ENCODE measurements at regions of chr9 and their contacts with region 1.

Region 1: DNA sequence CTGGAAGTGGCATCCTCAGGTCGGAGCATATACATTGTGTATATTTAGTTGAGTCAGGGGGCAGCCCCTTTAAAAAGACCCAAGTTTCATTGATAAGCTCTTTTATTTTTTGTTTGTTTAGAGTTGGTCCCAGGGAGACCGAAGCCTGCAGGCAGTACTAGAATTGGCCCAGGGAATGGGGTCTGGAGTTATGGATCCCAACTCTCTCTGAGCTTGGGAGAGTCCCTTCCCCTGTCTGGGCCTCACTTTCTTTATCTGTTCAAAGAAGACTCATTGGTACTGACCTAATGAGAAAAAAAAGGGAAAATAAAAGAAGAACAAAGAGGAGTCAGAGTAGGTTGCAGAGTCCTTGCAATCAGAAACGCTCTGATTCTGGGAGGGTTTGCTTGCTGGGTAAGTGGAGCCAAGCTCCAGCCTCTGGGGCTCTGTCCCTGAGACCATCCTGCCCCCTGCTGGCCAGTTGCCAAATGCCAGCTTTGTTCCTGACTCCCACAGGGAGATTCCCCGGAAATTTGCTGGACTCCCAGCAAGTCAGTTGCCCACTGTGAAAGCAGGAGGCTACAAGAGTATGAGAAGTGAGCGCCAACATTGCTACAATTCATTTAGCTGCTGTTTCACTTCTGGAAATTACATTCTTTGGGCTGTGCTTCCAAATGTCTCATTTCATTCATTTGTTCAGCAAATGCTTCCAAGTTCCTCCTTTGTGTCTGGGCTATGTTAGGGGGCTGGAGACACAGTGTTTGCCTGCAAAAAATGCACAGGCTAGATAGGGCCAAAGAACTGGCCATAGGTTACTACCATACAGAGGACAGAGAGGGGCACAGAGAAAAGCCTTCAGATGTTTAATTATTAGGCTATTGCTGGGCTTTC is 156.2 kb downstream of the MELK start:
- DNase-seq: peak; percentile 66
- H3K4me3 Mint-ChIP-seq: no peak overlapping the region
- H3K27ac Mint-ChIP-seq: no peak overlapping the region
- H3K4me1 Mint-ChIP-seq: peaks cover 4% of the 10 kb centered on the region
- H3K27me3 Mint-ChIP-seq: no peaks in the 10 kb centered on the region

Region 2: DNA sequence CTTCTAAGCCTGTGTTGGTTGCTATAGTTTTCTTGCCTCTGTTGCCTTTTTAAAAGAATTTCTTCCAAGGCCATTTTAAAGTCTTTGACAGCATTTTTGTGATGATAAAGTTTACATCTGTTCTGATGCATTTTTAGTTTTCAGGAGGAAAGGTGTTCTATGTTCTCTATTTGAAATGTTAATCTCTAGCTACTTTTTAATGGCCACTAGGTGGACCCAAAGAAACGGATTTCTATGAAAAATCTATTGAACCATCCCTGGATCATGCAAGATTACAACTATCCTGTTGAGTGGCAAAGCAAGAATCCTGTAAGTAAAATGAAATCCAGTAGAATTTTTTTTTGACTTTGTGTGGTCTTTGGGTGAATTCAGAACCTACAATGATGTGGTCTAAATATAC is 96.0 kb before region 1 on chr9:
- CTCF ChIA-PET with region 1: interaction called, 15 read pairs
- POLR2A ChIA-PET with region 1: interaction called, 3 read pairs
- DNase-seq: no peak
- H3K4me3 Mint-ChIP-seq: no peak overlapping the region
- H3K27ac Mint-ChIP-seq: no peak overlapping the region
- H3K4me1 Mint-ChIP-seq: peaks cover 4% of the 10 kb centered on the region
- H3K27me3 Mint-ChIP-seq: no peaks in the 10 kb centered on the region

Region 3: DNA sequence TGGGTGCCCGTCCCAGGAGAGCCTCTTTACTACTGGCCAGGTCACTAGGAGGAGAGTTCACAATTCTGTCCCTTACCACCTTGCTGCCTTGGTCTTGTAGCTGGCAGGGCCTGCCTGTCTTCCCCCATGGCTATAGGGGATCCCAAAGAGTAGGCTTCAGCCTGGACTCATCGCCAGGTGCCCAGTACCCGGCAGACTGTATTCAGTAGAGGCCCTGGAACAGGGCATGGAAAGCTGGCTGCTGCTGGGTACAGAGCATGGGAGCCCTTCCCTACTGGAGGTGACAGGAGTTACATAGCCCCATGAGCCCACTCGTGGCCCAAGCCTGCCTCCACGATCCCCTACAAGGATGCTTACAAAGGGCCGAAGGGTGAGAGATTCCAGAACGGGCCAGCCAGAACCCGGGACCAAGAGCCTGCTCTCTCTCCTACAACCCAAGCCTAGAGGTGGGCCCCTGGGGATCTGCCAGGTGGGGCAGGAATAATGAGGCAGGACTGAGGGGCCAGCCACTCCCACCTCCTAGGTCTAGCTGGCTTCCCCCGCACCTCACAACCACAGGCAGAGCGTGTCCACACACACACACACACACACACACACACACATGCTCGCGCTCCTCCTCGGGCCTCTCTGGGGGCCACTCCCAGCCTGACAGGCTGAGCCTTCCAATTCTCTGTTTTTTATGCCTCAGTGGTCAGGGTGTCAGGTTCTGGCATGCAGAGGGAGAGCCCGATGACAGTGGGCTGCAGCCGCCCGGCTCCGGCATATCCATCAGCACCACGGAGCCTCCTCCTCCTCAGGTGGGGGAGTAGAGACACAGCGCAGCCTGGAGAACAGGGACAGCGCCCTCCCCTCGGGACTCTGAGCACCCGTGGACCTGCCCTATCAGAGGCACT is 119.1 kb after region 1 on chr9:
- CTCF ChIA-PET with region 1: no interaction called
- POLR2A ChIA-PET with region 1: no interaction called
- DNase-seq: no peak
- H3K4me3 Mint-ChIP-seq: no peak overlapping the region
- H3K27ac Mint-ChIP-seq: no peak overlapping the region
- H3K4me1 Mint-ChIP-seq: peaks cover 1% of the 10 kb centered on the region
- H3K27me3 Mint-ChIP-seq: no peaks in the 10 kb centered on the region